Activated T-helper 1 cell treated with anti-CD3 and anti-CD28 coated beads, Interleukin-12 subunit alpha, Interleukin-12 subunit beta, Interleukin-2, Interleukin-4 antibody, amounts not matched to agents 30 ng/mL and 10 ng/mL and 1 ng/mL, durations not matched to agents 14 hours and 24 hours and 36 hours (primary cell): ENCODE measurements at regions of chr16 and their contacts with region 1.

Region 1: GRCh38 chr16:2155091-2156021 is at the start of gene TRAF7:
- DNase-seq: peak; percentile 98
- H3K4me3 Mint-ChIP-seq: peak within 1 kb of the TSS; percentile 99
- H3K27ac Mint-ChIP-seq: peak within 1 kb of the TSS; percentile 93
- H3K4me1 Mint-ChIP-seq: peaks cover 24% of the 10 kb centered on the region
- H3K27me3 Mint-ChIP-seq: no peaks in the 10 kb centered on the region
- total RNA-seq, gene TRAF7: 70.4 and 73.1 TPM in 2 replicates

Region 2: DNA sequence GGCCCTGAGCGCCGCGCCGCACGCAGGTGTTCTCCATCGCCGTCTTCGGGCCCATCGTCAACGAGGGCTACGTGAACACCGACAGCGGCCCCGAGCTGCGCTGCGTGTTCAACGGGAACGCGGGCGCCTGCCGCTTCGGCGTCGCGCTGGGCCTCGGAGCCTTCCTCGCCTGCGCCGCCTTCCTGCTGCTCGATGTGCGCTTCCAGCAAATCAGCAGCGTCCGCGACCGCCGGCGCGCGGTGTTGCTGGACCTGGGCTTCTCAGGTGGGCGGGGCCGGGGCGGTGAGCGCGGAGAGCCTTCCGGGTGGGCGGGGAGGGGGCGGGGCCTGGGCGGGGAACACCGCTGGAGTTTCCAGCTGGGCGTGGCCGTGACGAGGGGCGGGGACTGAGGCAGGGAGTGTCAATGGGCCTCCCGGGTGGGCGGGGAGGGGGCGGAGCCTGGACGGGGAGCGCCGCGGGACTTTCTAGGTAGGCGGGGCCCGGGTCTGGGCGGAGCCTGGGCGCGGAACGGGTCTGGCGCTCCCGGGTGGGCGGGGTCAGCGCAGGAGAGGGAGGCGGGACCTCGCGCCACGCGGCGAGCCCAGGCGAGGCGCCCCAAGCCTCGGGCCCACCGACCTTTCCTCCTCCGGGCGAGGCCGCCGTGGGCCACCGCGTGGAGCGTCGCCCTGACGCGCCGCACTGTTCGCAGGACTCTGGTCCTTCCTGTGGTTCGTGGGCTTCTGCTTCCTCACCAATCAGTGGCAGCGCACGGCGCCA is 163.2 kb before region 1 on chr16:
- intact Hi-C with region 1: loop called (anchors 1 kb)
- DNase-seq: peak; percentile 91
- H3K4me3 Mint-ChIP-seq: peak overlapping the region; percentile 82
- H3K27ac Mint-ChIP-seq: no peak overlapping the region
- H3K4me1 Mint-ChIP-seq: peaks cover 26% of the 10 kb centered on the region
- H3K27me3 Mint-ChIP-seq: peaks cover 11% of the 10 kb centered on the region

Region 3: GRCh38 chr16:2047330-2048115 is 107.8 kb before region 1 on chr16 and contains the starts of genes NTHL1 and TSC2:
- intact Hi-C with region 1: loop called (anchors 1 kb)
- DNase-seq: peak; percentile 95
- H3K4me3 Mint-ChIP-seq: peak within 1 kb of the TSS; percentile 93
- H3K27ac Mint-ChIP-seq: peak within 1 kb of the TSS; percentile 83
- H3K4me1 Mint-ChIP-seq: peaks cover 21% of the 10 kb centered on the region
- H3K27me3 Mint-ChIP-seq: no peaks in the 10 kb centered on the region
- total RNA-seq, gene NTHL1: 50.0 and 52.7 TPM in 2 replicates
- total RNA-seq, gene TSC2: 96.4 and 111 TPM in 2 replicates

Region 4: GRCh38 chr16:2190659-2191445 is 35.5 kb after region 1 on chr16:
- intact Hi-C with region 1: no loop called
- DNase-seq: no peak
- H3K4me3 Mint-ChIP-seq: no peak overlapping the region
- H3K27ac Mint-ChIP-seq: no peak overlapping the region
- H3K4me1 Mint-ChIP-seq: no peaks in the 10 kb centered on the region
- H3K27me3 Mint-ChIP-seq: peaks cover 15% of the 10 kb centered on the region

Region 5: GRCh38 chr16:2205104-2205966 is 50.0 kb after region 1 on chr16 and contains the start of gene MLST8:
- intact Hi-C with region 1: loop called (anchors 1 kb)
- DNase-seq: peak; percentile 90
- H3K4me3 Mint-ChIP-seq: peak within 1 kb of the TSS; percentile 86
- H3K27ac Mint-ChIP-seq: peak within 1 kb of the TSS; percentile 68
- H3K4me1 Mint-ChIP-seq: peaks cover 22% of the 10 kb centered on the region
- H3K27me3 Mint-ChIP-seq: peaks cover 13% of the 10 kb centered on the region
- total RNA-seq, gene MLST8: 57.0 and 61.9 TPM in 2 replicates

Region 6: GRCh38 chr16:2223375-2224182 is 68.2 kb after region 1 on chr16 and contains the start of gene E4F1:
- intact Hi-C with region 1: loop called (anchors 1 kb)
- DNase-seq: peak; percentile 99
- H3K4me3 Mint-ChIP-seq: peak within 1 kb of the TSS; percentile 87
- H3K27ac Mint-ChIP-seq: peak within 1 kb of the TSS; percentile 77
- H3K4me1 Mint-ChIP-seq: peaks cover 9% of the 10 kb centered on the region
- H3K27me3 Mint-ChIP-seq: no peaks in the 10 kb centered on the region
- total RNA-seq, gene E4F1: 35.6 and 37.4 TPM in 2 replicates

Region 7: GRCh38 chr16:2267913-2268666 is 112.7 kb after region 1 on chr16 and contains the start of gene RNPS1:
- intact Hi-C with region 1: loop called (anchors 1 kb)
- DNase-seq: peak; percentile 96
- H3K4me3 Mint-ChIP-seq: peak within 1 kb of the TSS; percentile 94
- H3K27ac Mint-ChIP-seq: peak within 1 kb of the TSS; percentile 98
- H3K4me1 Mint-ChIP-seq: peaks cover 41% of the 10 kb centered on the region
- H3K27me3 Mint-ChIP-seq: peaks cover 2% of the 10 kb centered on the region
- total RNA-seq, gene RNPS1: 398 and 403 TPM in 2 replicates

Region 8: GRCh38 chr16:2333772-2334379 is 178.5 kb after region 1 on chr16:
- intact Hi-C with region 1: no loop called
- DNase-seq: no peak
- H3K4me3 Mint-ChIP-seq: no peak overlapping the region
- H3K27ac Mint-ChIP-seq: no peak overlapping the region
- H3K4me1 Mint-ChIP-seq: peaks cover 16% of the 10 kb centered on the region
- H3K27me3 Mint-ChIP-seq: no peaks in the 10 kb centered on the region